MCF 10A (cell line): ENCODE measurements at regions of chr14 and their contacts with region 1.

Region 1: GRCh38 chr14:52370343-52370935 is 56.3 kb downstream of the PTGER2 start:
- DNase-seq: peak; percentile 74
- H3K4me3 Mint-ChIP-seq: no peak overlapping the region
- H3K27ac Mint-ChIP-seq: no peak overlapping the region
- H3K4me1 Mint-ChIP-seq: peaks cover 1% of the 10 kb centered on the region
- H3K27me3 Mint-ChIP-seq: no peaks in the 10 kb centered on the region
- CTCF ChIP-seq: no peak

Region 2: GRCh38 chr14:52351233-52352060 is 19.0 kb before region 1 on chr14:
- CTCF ChIA-PET with region 1: no interaction called
- POLR2A ChIA-PET with region 1: interaction called, 16 read pairs
- intact Hi-C with region 1: no loop called
- DNase-seq: peak; percentile 78
- H3K4me3 Mint-ChIP-seq: peak overlapping the region; percentile 28
- H3K27ac Mint-ChIP-seq: peak overlapping the region; percentile 82
- H3K4me1 Mint-ChIP-seq: peaks cover 43% of the 10 kb centered on the region
- H3K27me3 Mint-ChIP-seq: no peaks in the 10 kb centered on the region
- CTCF ChIP-seq: no peak

Region 3: DNA sequence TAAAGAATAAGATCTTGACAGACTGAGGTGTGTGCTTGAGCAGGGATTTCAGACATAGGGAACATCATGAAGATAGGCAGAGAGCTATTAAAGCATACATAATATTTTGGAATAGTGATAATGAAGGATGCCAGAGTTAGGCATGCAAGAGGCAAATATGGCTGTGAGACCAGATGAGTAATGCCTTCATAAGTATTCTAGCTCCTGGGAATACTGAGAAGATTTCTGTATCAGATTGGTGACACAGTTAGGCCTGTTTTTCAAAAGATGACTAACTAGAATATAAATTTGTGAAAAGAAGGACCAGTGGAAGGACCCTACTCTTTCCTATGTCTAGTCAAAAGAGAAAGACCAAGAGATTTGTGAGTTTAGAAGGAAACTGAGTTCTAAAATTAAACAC is 73.1 kb after region 1 on chr14:
- CTCF ChIA-PET with region 1: no interaction called
- POLR2A ChIA-PET with region 1: no interaction called
- intact Hi-C with region 1: no loop called
- DNase-seq: no peak
- H3K4me3 Mint-ChIP-seq: no peak overlapping the region
- H3K27ac Mint-ChIP-seq: no peak overlapping the region
- H3K4me1 Mint-ChIP-seq: peaks cover 6% of the 10 kb centered on the region
- H3K27me3 Mint-ChIP-seq: no peaks in the 10 kb centered on the region
- CTCF ChIP-seq: no peak